ENCODE measurements at regions of chr20 and their contacts with region 1.

Region 1: DNA sequence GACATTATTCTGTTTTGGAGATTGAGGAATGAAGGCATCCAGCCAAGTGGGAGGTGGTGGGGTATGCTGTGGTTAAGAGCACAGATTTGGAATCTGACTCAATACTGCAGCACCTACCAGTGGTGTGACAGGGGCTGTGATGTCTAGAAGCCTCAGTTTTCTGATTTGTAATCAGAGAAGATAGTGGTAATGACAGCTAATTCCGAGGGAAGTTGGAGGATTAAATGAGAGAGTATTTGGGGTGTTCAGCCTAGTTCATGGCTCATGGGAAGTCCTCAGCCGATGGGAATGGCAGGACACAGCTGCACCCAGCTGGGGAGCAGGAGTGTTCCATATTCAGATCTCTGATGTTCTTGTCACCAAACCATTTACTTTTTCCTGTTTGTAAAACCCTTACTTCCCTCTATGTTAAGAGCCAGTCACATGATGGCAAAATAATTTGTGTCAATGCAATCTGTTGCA is 9.3 kb downstream of the SLC9A8 start:
- DNase-seq: no peak
- ATAC-seq: peak; percentile 68
- H3K4me3 ChIP-seq: no peak overlapping the region
- H3K27ac ChIP-seq: 0 out of 2 replicates have a peak overlapping the region, but pooled peaks have one; percentile 14
- H3K4me1 ChIP-seq: peaks cover 22% of the 10 kb centered on the region
- H3K27me3 ChIP-seq: no peaks in the 10 kb centered on the region
- CTCF ChIP-seq: peak; percentile 34 to 55 (median 39); a peak in 5 of 6 replicates
- EP300 ChIP-seq: 0 out of 4 replicates have a peak, but pooled peaks of 1 of the 2 experiments have one; percentile 18
- POLR2A ChIP-seq: no peak
- RAD21 ChIP-seq: peak; percentile 61

Region 2: GRCh38 chr20:49832632-49833327 is 10.9 kb after region 1 on chr20:
- CTCF ChIA-PET with region 1: interaction called, 8 read pairs
- POLR2A ChIA-PET with region 1: no interaction called
- RAD21 ChIA-PET with region 1: interaction called, 6 read pairs
- SMC1A ChIA-PET with region 1: interaction called, 12 read pairs
- in situ Hi-C with region 1: no loop called
- intact Hi-C with region 1: no loop called
- DNase-seq: no peak
- ATAC-seq: peak; percentile 31
- H3K4me3 ChIP-seq: no peak overlapping the region
- H3K27ac ChIP-seq: peak overlapping the region; percentile 58
- H3K4me1 ChIP-seq: peaks cover 17% of the 10 kb centered on the region
- H3K27me3 ChIP-seq: no peaks in the 10 kb centered on the region
- CTCF ChIP-seq: no peak
- EP300 ChIP-seq: no peak
- POLR2A ChIP-seq: no peak
- RAD21 ChIP-seq: no peak

Measured in GM12878 (cell line).